MCF 10A (cell line): ENCODE measurements at regions of chr7 and their contacts with region 1.

Region 1: DNA sequence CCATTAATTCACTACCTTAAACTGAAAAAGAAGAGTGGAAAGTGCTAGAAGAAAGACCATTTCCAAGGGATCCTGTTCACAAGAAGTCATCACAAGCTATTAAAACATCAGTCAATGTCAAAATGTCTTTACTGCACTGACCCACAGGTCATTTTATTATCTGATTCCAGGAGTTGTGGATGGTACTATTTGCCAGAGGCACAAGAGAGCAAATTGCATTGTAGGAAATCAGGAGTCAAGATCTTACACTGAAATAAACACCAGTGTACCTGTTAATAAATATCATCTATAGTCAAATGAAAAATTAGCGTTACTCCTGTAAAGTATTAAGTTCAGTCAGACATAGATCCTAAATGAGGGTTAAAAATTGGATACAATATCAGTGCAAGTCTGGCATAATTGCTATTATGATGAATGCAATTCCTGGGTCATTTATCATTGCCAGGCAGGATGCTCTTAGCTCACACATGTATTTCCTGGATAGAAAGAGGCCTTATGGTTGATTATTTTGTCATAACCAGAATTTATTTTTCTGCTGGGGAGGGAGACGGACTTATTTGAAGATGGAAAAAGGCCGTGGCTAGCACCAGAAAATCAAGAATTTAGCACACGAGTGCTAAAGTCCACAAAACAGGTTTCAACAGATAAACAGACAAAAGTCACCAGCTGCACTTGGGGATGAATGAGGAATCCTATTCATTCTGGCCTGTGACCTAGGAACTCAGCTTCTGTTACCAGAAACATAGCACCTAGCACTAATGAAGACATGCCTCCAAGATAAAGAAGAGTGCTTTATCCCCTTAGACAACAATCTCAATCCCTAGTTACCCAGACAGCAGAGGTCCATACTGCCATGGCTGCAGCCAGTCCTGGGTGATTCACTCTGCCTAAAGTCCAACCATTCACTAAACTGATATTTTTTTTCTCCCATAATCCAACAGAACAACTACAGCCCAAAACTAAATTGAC is 683.1 kb upstream of the POM121L12 start:
- DNase-seq: no peak
- H3K4me3 Mint-ChIP-seq: no peak overlapping the region
- H3K27ac Mint-ChIP-seq: no peak overlapping the region
- H3K4me1 Mint-ChIP-seq: peaks cover 4% of the 10 kb centered on the region
- H3K27me3 Mint-ChIP-seq: peaks cover 38% of the 10 kb centered on the region
- CTCF ChIP-seq: no peak

Region 2: DNA sequence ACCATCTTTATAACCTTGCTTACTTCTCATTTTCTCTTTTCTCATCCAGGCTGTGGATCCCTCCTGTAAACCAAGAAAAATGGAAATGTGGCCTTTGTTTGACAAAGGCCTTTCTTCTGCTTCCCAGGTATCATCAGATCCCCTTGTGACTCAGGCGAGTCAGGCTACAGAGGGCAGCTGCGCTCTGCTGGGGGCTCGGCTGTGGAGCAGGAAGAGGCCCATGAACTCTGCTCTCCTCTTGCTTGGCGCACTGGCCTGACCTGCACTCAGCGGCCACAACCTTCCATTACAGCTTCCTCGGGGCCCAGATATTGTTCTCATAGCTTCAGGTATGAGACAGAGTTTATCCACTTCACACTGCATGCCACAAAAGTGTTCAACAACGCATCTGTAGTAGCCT is 578.1 kb before region 1 on chr7:
- CTCF ChIA-PET with region 1: no interaction called
- POLR2A ChIA-PET with region 1: no interaction called
- intact Hi-C with region 1: loop called (anchors 5 kb)
- DNase-seq: no peak
- H3K4me3 Mint-ChIP-seq: no peak overlapping the region
- H3K27ac Mint-ChIP-seq: no peak overlapping the region
- H3K4me1 Mint-ChIP-seq: no peaks in the 10 kb centered on the region
- H3K27me3 Mint-ChIP-seq: peaks cover 33% of the 10 kb centered on the region
- CTCF ChIP-seq: no peak

Region 3: GRCh38 chr7:52209614-52210013 is 142.7 kb before region 1 on chr7:
- CTCF ChIA-PET with region 1: no interaction called
- POLR2A ChIA-PET with region 1: no interaction called
- intact Hi-C with region 1: no loop called
- DNase-seq: no peak
- H3K4me3 Mint-ChIP-seq: no peak overlapping the region
- H3K27ac Mint-ChIP-seq: no peak overlapping the region
- H3K4me1 Mint-ChIP-seq: no peaks in the 10 kb centered on the region
- H3K27me3 Mint-ChIP-seq: no peaks in the 10 kb centered on the region
- CTCF ChIP-seq: no peak

Region 4: GRCh38 chr7:52670608-52671225 is 318.4 kb after region 1 on chr7:
- CTCF ChIA-PET with region 1: no interaction called
- POLR2A ChIA-PET with region 1: no interaction called
- intact Hi-C with region 1: no loop called
- DNase-seq: no peak
- H3K4me3 Mint-ChIP-seq: no peak overlapping the region
- H3K27ac Mint-ChIP-seq: no peak overlapping the region
- H3K4me1 Mint-ChIP-seq: no peaks in the 10 kb centered on the region
- H3K27me3 Mint-ChIP-seq: no peaks in the 10 kb centered on the region
- CTCF ChIP-seq: no peak